ENCODE measurements at regions of chr5 and their contacts with region 1.

Region 1: GRCh38 chr5:78294248-78295034 is at the start of gene AP3B1:
- DNase-seq: peak; percentile 98
- H3K4me3 Mint-ChIP-seq: peak within 1 kb of the TSS; percentile 95
- H3K27ac Mint-ChIP-seq: peak within 1 kb of the TSS; percentile 96
- H3K4me1 Mint-ChIP-seq: peaks cover 37% of the 10 kb centered on the region
- H3K27me3 Mint-ChIP-seq: no peaks in the 10 kb centered on the region
- total RNA-seq, gene AP3B1: 36.5 to 40.2 TPM

Region 2: DNA sequence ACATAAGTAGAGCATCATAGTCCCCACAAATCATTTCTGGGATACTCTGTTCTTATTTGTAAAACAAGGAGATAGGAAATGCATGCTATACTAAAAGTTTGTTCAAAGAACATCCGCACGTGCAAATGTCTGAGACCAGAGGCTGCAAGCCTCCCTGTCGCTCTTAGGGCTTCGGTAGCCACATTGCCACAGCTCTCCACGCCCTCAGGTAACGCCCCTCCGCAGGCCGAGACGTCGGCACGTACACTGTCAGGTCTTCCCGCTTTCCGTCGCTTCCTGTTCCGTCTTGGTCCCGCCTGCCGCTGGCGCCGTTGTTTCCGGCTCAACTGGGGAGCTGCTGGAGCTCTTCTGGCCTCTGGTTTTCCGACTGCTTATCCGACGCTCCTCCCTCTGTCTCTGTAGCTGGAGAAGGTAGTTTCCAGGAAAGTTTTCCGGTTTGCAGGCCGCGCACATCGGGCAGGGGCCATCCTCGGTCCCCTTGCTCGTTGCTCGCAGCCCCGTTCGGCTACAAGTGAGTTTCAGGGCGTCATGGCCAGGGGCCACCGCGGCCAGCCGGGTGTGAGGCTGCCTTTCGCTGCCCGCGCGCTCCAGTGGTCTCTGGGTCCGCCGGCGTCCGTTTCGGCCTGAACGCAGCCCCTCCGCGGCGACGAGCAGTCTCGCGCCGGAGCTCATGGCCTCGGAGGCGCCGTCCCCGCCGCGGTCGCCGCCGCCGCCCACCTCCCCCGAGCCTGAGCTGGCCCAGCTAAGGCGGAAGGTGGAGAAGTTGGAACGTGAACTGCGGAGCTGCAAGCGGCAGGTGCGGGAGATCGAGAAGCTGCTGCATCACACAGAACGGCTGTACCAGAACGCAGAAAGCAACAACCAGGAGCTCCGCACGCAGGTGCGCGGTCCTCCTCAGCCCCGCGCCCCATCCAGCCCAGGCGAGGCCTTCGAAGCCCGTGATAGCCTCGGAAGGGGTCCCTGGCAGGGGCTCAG is 1264.1 kb before region 1 on chr5 and contains the start of gene AGGF1:
- CTCF ChIA-PET with region 1: no interaction called
- POLR2A ChIA-PET with region 1: no interaction called
- intact Hi-C with region 1: loop called (anchors 10 kb)
- DNase-seq: peak; percentile 96
- H3K4me3 Mint-ChIP-seq: peak within 1 kb of the TSS; percentile 88
- H3K27ac Mint-ChIP-seq: peak within 1 kb of the TSS; percentile 78
- H3K4me1 Mint-ChIP-seq: peaks cover 32% of the 10 kb centered on the region
- H3K27me3 Mint-ChIP-seq: no peaks in the 10 kb centered on the region
- total RNA-seq, gene AGGF1: 26.5 to 27.6 TPM

Region 3: DNA sequence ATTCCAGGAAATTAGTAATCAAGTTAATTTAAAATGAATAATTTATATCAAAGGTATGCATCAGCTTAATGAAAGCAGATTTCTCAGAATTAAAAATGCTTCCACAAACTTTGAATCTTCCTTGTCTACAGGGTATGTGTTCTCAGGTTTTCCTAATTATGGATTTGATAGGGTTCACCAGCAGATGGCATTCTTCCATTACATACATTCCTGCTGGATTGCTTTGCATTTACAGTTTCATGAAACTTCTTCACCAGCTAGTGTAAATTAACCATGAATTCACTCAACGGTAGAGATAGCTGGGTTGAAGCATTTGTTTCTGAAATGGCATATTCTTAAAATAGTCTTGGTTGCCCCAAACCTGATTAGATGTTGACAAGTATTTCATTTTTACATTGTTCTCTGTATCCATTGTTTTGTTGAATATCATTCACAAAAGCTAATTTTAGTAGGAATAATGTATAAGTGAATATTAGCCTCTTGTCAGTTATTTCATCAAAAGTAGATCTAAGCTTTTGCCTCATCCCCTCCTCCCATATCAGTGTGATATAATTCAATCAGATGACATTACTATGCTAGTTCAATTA is 733.7 kb before region 1 on chr5:
- CTCF ChIA-PET with region 1: no interaction called
- POLR2A ChIA-PET with region 1: no interaction called
- intact Hi-C with region 1: loop called (anchors 10 kb)
- DNase-seq: no peak
- H3K4me3 Mint-ChIP-seq: no peak overlapping the region
- H3K27ac Mint-ChIP-seq: no peak overlapping the region
- H3K4me1 Mint-ChIP-seq: no peaks in the 10 kb centered on the region
- H3K27me3 Mint-ChIP-seq: peaks cover 1% of the 10 kb centered on the region

Region 4: DNA sequence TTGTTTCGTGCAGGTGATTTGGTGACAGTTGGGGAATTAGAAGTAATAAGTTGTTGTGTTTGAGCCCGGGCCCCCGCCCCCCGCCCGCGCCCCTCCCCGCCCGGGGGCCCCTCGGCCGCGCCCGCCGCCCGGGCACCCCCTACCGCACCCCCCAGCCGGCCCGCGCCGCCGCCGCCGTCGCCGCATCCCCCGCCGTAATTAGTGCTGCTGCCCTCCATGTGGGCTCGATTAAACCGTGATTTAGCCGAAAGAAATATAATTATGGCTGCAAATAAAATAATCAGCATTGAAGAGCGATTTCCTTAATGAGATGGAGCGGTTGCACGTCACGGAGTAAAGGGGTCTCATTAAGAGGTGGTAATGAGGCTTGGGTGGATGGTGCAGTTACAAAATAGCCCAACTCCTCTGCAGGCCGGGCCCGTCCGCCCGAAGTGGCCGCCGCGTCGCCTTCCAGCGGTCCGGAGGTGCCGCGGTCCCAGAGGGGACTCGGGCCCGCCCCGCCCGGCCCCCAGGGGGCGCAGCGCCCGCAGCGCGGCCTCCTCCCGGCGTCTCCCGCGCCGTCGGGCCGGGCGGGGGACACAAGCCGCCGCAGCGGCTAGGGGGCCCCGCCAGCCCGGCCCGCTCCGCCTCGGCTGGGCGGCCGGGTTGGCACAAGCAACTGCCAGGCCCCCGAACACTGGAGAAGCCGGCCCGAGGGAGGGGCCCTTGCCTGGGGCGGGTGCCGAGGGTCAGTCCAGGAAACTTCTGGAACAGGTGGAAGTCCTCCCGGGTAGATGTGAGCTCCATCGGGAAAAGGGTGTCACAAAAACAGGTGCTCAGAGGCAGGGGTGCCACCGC is 649.1 kb before region 1 on chr5:
- CTCF ChIA-PET with region 1: no interaction called
- POLR2A ChIA-PET with region 1: no interaction called
- intact Hi-C with region 1: loop called (anchors 10 kb)
- DNase-seq: peak; percentile 53
- H3K4me3 Mint-ChIP-seq: peak overlapping the region; percentile 48
- H3K27ac Mint-ChIP-seq: no peak overlapping the region
- H3K4me1 Mint-ChIP-seq: peaks cover 27% of the 10 kb centered on the region
- H3K27me3 Mint-ChIP-seq: peaks cover 66% of the 10 kb centered on the region

Region 5: DNA sequence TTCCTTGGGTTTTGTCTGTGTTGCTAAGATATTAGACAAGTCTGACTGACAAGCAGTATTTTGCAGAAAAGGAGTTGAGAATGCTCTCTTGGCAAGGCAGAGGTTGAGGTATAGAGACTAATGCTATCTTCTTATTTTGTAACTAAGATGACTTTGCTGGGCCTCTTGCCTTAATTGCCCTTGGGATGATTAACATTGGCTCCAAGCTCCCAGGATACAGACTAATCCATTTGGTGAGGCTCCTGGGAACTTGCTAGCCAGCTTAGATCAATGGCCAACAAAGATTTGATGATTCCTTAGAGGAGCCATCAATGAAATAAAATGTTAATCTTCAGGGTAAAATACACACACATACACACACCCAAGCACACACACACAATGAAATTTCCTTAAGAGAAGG is 28.8 kb after region 1 on chr5:
- CTCF ChIA-PET with region 1: no interaction called
- POLR2A ChIA-PET with region 1: no interaction called
- intact Hi-C with region 1: no loop called
- DNase-seq: no peak
- H3K4me3 Mint-ChIP-seq: no peak overlapping the region
- H3K27ac Mint-ChIP-seq: no peak overlapping the region
- H3K4me1 Mint-ChIP-seq: no peaks in the 10 kb centered on the region
- H3K27me3 Mint-ChIP-seq: peaks cover 7% of the 10 kb centered on the region

Region 6: GRCh38 chr5:78359831-78360673 is 65.6 kb after region 1 on chr5 and contains the start of gene SCAMP1:
- CTCF ChIA-PET with region 1: interaction called, 19 read pairs
- POLR2A ChIA-PET with region 1: interaction called, 37 read pairs
- intact Hi-C with region 1: loop called (anchors 1 kb)
- DNase-seq: peak; percentile 94
- H3K4me3 Mint-ChIP-seq: peak within 1 kb of the TSS; percentile 94
- H3K27ac Mint-ChIP-seq: peak within 1 kb of the TSS; percentile 96
- H3K4me1 Mint-ChIP-seq: peaks cover 38% of the 10 kb centered on the region
- H3K27me3 Mint-ChIP-seq: no peaks in the 10 kb centered on the region
- total RNA-seq, gene SCAMP1: 13.6 to 18.3 TPM

Region 7: GRCh38 chr5:79235634-79236363 is 941.4 kb after region 1 on chr5 and contains the start of gene JMY:
- CTCF ChIA-PET with region 1: no interaction called
- POLR2A ChIA-PET with region 1: no interaction called
- intact Hi-C with region 1: loop called (anchors 2 kb)
- DNase-seq: peak; percentile 91
- H3K4me3 Mint-ChIP-seq: peak within 1 kb of the TSS; percentile 94
- H3K27ac Mint-ChIP-seq: peak within 1 kb of the TSS; percentile 98
- H3K4me1 Mint-ChIP-seq: peaks cover 15% of the 10 kb centered on the region
- H3K27me3 Mint-ChIP-seq: no peaks in the 10 kb centered on the region
- total RNA-seq, gene JMY: 8.6 to 9.1 TPM